AG04450 (cell line): ENCODE measurements at regions of chr11 and their contacts with region 1.

Region 1: GRCh38 chr11:36702330-36703055 is 104.5 kb upstream of the RAG2 start:
- DNase-seq: peak; percentile 30
- H3K4me3 ChIP-seq: no peak overlapping the region
- H3K27ac ChIP-seq: no peak overlapping the region
- H3K27me3 ChIP-seq: no peaks in the 10 kb centered on the region
- CTCF ChIP-seq: peak; percentile 76

Region 2: DNA sequence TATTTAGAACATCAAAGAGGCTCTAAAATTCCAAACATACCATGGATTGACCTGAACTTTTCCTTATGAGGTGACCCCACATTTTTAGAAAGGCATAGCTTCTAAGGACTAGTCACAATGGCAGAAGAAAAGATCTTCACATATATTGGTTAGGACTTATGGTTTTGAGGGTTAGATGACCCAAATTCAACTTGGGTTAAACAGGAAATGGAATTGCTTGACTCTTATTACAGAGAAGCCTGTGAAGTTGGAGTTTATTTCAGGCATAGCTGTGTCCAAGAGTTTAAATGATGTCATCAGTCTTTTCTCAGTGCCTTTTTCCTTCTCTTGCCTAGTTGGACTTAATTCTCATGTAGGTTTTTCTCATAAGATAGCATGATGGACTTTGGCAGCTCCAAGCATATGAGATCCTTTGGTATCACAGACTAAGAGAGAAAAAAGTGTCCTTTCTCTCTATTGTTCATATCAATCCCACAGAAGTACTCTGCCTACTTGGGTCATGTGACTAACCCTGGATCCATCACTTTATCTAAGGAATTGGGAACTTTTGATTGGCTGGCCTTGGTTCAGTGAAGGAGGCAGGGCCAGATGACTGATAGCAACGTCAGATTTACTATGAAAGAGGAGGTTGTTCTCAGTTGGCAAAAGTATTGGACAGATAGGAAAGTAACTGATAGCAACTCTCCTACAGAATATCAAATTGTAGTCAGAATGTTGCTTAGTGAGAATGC is 151.9 kb before region 1 on chr11:
- CTCF ChIA-PET with region 1: no interaction called
- POLR2A ChIA-PET with region 1: no interaction called
- DNase-seq: no peak
- H3K4me3 ChIP-seq: no peak overlapping the region
- H3K27ac ChIP-seq: no peak overlapping the region
- H3K27me3 ChIP-seq: no peaks in the 10 kb centered on the region
- CTCF ChIP-seq: no peak

Region 3: DNA sequence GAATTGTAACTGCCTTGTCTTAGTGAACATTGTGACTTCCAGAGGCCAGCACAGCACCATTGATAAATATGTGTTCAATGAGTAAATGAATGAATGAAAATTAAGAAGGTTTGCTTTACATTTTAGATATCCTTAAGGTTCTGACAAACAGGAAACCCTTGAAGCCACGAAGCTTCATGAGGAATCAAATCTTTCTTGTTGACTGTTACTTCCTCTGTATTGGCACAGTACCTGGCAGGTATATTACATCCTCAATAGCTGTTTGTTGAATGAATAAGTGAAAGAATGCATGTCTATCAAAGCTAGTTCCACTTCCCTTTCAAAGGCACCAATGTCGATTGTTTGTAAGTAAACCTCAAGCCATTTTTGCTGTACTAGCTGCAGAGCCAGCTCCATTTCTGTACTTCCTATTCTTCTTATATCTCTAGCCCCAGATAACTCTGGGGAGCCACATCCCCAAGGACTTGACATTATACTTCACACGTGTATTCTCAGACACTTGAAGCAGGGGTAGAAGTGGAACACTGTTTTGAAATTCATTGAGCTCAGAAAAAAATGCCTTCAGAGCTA is 35.9 kb after region 1 on chr11:
- CTCF ChIA-PET with region 1: interaction called, 42 read pairs
- POLR2A ChIA-PET with region 1: no interaction called
- DNase-seq: no peak
- H3K4me3 ChIP-seq: no peak overlapping the region
- H3K27ac ChIP-seq: no peak overlapping the region
- H3K27me3 ChIP-seq: no peaks in the 10 kb centered on the region
- CTCF ChIP-seq: no peak

Region 4: DNA sequence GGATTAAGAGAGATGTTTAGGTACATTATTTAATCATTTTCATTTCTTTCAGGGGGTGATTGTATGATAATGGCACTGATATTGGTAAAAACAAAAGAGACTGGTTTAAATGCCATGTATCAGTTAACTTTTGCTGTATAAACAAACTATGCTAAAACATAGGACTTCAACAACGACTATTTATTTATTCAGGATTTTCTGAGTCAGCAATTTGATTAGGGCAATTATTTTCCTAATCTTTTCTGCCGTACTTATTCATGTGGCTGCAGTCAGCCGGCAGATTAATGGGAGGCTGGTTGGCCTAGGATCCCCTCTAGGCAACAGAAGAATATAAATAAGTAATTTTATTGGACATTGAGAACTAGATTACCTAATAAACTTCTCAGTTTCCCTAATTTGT is 557.2 kb after region 1 on chr11:
- CTCF ChIA-PET with region 1: no interaction called
- POLR2A ChIA-PET with region 1: no interaction called
- DNase-seq: no peak
- H3K4me3 ChIP-seq: no peak overlapping the region
- H3K27ac ChIP-seq: no peak overlapping the region
- H3K27me3 ChIP-seq: no peaks in the 10 kb centered on the region
- CTCF ChIP-seq: no peak